Activated naive CD4-positive, alpha-beta T cell treated with anti-CD3 and anti-CD28 coated beads for 36 hours (primary cell): ENCODE measurements at regions of chr1 and their contacts with region 1.

Region 1: GRCh38 chr1:156146020-156146768 is 7.2 kb upstream of the SEMA4A start:
- DNase-seq: peak; percentile 63
- H3K4me3 Mint-ChIP-seq: peak overlapping the region; percentile 67
- H3K27ac Mint-ChIP-seq: peak overlapping the region; percentile 85
- H3K4me1 Mint-ChIP-seq: peaks cover 49% of the 10 kb centered on the region
- H3K27me3 Mint-ChIP-seq: no peaks in the 10 kb centered on the region

Region 2: GRCh38 chr1:155769257-155769656 is 376.9 kb before region 1 on chr1:
- CTCF ChIA-PET with region 1: no interaction called
- intact Hi-C with region 1: no loop called
- DNase-seq: no peak
- H3K4me3 Mint-ChIP-seq: no peak overlapping the region
- H3K27ac Mint-ChIP-seq: no peak overlapping the region
- H3K4me1 Mint-ChIP-seq: peaks cover 3% of the 10 kb centered on the region
- H3K27me3 Mint-ChIP-seq: no peaks in the 10 kb centered on the region

Region 3: DNA sequence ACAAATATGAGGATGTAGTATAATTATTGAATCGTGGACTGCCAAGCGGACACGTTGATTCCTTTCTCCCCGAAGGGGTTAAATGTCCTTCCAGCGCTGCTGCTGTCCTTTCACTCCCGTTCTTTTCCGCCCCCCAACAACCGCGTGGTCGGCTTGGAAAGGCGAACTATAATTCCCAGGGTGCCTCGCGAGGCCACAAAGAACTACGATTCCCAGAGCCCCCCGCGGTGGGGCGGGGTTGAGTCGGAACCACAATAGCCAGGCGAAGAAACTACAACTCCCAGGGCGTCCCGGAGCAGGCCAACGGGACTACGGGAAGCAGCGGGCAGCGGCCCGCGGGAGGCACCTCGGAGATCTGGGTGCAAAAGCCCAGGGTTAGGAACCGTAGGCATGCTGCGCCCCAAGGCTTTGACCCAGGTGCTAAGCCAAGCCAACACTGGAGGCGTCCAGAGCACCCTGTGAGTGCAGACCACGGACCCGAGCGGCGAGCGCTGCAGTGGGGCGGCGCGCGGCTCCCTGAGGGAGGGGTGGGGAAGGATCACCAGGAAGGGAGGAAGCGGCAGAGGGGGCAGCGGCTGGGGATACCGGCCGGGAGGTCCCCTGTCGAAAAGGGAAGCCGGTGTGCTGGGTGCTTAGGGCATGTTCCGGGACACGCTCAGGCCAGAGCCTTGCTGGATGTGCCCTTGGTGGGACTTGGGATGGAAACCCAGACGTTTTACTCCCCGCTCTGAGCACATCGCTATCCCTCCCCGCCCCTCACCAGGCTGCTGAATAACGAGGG is 91.5 kb before region 1 on chr1 and contains the start of gene LAMTOR2:
- CTCF ChIA-PET with region 1: no interaction called
- intact Hi-C with region 1: no loop called
- DNase-seq: peak; percentile 98
- H3K4me3 Mint-ChIP-seq: peak within 1 kb of the TSS; percentile 92
- H3K27ac Mint-ChIP-seq: peak within 1 kb of the TSS; percentile 93
- H3K4me1 Mint-ChIP-seq: peaks cover 24% of the 10 kb centered on the region
- H3K27me3 Mint-ChIP-seq: no peaks in the 10 kb centered on the region
- total RNA-seq, gene LAMTOR2: 54.9 to 55.9 TPM

Region 4: DNA sequence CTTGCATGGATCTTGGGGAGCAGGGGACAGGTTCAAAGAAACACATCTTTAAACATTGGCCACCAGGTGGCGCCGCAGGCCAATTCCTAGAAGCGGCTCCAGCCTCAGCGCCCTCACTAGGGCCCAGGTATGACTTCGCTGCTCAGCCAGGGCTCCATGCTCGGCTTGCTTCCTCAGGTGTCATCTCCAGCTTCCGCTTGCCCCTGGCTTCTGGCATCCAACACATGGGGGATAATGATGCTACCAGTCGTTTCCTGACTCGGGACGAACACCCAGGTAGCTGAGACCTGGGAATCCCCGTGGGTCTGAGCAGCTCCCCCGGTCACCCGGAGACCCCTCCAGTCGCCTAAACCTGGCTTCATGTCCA is 55.4 kb before region 1 on chr1:
- CTCF ChIA-PET with region 1: interaction called, 13 read pairs
- intact Hi-C with region 1: loop called (anchors 1 kb)
- DNase-seq: peak; percentile 95
- H3K4me3 Mint-ChIP-seq: no peak overlapping the region
- H3K27ac Mint-ChIP-seq: no peak overlapping the region
- H3K4me1 Mint-ChIP-seq: peaks cover 7% of the 10 kb centered on the region
- H3K27me3 Mint-ChIP-seq: peaks cover 19% of the 10 kb centered on the region

Region 5: DNA sequence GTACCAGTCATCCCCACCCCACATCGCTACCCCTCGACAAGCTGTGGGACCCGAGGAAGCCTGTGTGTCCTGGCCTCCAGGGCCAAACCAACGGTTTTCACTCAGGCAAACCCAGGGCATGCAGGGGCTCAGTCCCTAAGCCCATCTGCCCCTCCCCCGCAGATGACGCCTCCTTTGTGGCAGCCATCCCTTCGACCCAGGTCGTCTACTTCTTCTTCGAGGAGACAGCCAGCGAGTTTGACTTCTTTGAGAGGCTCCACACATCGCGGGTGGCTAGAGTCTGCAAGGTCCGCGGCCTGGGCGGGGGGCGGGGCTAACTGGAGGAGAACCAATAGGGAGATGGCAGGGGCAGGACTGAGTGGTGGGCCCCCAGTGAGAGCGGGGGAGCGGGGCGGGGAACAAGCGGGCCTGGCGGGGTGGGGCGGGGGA is 14.6 kb after region 1 on chr1:
- CTCF ChIA-PET with region 1: interaction called, 7 read pairs
- intact Hi-C with region 1: loop called (anchors 1 kb)
- DNase-seq: peak; percentile 73
- H3K4me3 Mint-ChIP-seq: peak overlapping the region; percentile 63
- H3K27ac Mint-ChIP-seq: peak overlapping the region; percentile 83
- H3K4me1 Mint-ChIP-seq: peaks cover 69% of the 10 kb centered on the region
- H3K27me3 Mint-ChIP-seq: no peaks in the 10 kb centered on the region

Region 6: GRCh38 chr1:156233426-156234127 is 87.4 kb after region 1 on chr1:
- CTCF ChIA-PET with region 1: interaction called, 21 read pairs
- intact Hi-C with region 1: no loop called
- DNase-seq: no peak
- H3K4me3 Mint-ChIP-seq: no peak overlapping the region
- H3K27ac Mint-ChIP-seq: no peak overlapping the region
- H3K4me1 Mint-ChIP-seq: peaks cover 2% of the 10 kb centered on the region
- H3K27me3 Mint-ChIP-seq: no peaks in the 10 kb centered on the region

Region 7: GRCh38 chr1:156445789-156446263 is 299.6 kb after region 1 on chr1:
- CTCF ChIA-PET with region 1: interaction called, 5 read pairs
- intact Hi-C with region 1: loop called (anchors 5 kb)
- DNase-seq: peak; percentile 93
- H3K4me3 Mint-ChIP-seq: no peak overlapping the region
- H3K27ac Mint-ChIP-seq: peak overlapping the region; percentile 22
- H3K4me1 Mint-ChIP-seq: peaks cover 21% of the 10 kb centered on the region
- H3K27me3 Mint-ChIP-seq: peaks cover 28% of the 10 kb centered on the region

Region 8: GRCh38 chr1:156601122-156601830 is 455.1 kb after region 1 on chr1 and contains the start of gene GPATCH4:
- CTCF ChIA-PET with region 1: no interaction called
- intact Hi-C with region 1: no loop called
- DNase-seq: peak; percentile 89
- H3K4me3 Mint-ChIP-seq: peak within 1 kb of the TSS; percentile 91
- H3K27ac Mint-ChIP-seq: peak within 1 kb of the TSS; percentile 97
- H3K4me1 Mint-ChIP-seq: peaks cover 47% of the 10 kb centered on the region
- H3K27me3 Mint-ChIP-seq: no peaks in the 10 kb centered on the region
- total RNA-seq, gene GPATCH4: 37.5 to 38.3 TPM

Region 9: GRCh38 chr1:156641761-156642264 is 495.6 kb after region 1 on chr1 and contains the start of gene BCAN:
- CTCF ChIA-PET with region 1: no interaction called
- intact Hi-C with region 1: no loop called
- DNase-seq: peak; percentile 32
- H3K4me3 Mint-ChIP-seq: peak within 1 kb of the TSS; percentile 10
- H3K27ac Mint-ChIP-seq: no peak within 1 kb of the TSS
- H3K4me1 Mint-ChIP-seq: peaks cover 16% of the 10 kb centered on the region
- H3K27me3 Mint-ChIP-seq: peaks cover 78% of the 10 kb centered on the region
- total RNA-seq, gene BCAN: not detected